ENCODE measurements at regions of chr6 and their contacts with region 1.

Region 1: DNA sequence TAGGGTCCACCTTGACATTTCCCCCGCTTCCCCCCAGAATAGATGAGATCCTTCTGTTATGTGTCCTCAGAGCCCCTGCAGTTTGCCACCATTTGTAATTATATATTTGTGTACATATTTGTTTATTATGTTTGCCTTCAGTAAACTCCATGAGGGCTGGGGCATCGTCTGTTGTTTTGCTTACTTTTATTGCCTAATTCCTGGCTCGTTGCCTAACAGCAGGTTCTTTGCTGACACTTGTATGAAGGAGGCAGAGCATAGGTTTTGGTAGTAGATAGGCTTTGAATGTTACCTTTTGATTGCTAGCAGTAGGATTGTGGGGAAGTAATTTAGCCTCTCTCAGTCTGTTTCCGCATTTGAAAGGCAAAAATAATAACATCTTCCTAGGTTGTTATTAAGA is 9.9 kb downstream of the MAP3K4 start:
- DNase-seq: no peak
- ATAC-seq: no peak
- H3K4me3 ChIP-seq: no peak overlapping the region
- H3K27ac ChIP-seq: no peak overlapping the region
- H3K4me1 ChIP-seq: no peaks in the 10 kb centered on the region; the same call in 1 of the 2 replicates
- H3K27me3 ChIP-seq: no peaks in the 10 kb centered on the region
- CTCF ChIP-seq: no peak
- EP300 ChIP-seq: no peak
- POLR2A ChIP-seq: no peak
- RAD21 ChIP-seq: no peak

Region 2: GRCh38 chr6:161011492-161012480 is 10.4 kb after region 1 on chr6:
- CTCF ChIA-PET with region 1: interaction called, 4 read pairs
- POLR2A ChIA-PET with region 1: interaction called, 7 read pairs
- RAD21 ChIA-PET with region 1: no interaction called
- SMC1A ChIA-PET with region 1: interaction called, 10 read pairs
- in situ Hi-C with region 1: no loop called
- intact Hi-C with region 1: no loop called
- DNase-seq: no peak
- ATAC-seq: peak; percentile 52; the same call in 2 of the 3 replicates
- H3K4me3 ChIP-seq: no peak overlapping the region
- H3K27ac ChIP-seq: no peak overlapping the region
- H3K4me1 ChIP-seq: no peaks in the 10 kb centered on the region
- H3K27me3 ChIP-seq: no peaks in the 10 kb centered on the region
- CTCF ChIP-seq: no peak
- EP300 ChIP-seq: no peak
- POLR2A ChIP-seq: no peak
- RAD21 ChIP-seq: no peak